ENCODE measurements at regions of chr13 and their contacts with region 1.

Region 1: GRCh38 chr13:49300739-49301589 is 53.2 kb downstream of the CDADC1 start:
- DNase-seq: peak; percentile 91
- H3K4me3 Mint-ChIP-seq: peak overlapping the region; percentile 47
- H3K27ac Mint-ChIP-seq: peak overlapping the region; percentile 21
- H3K4me1 Mint-ChIP-seq: peaks cover 12% of the 10 kb centered on the region
- H3K27me3 Mint-ChIP-seq: no peaks in the 10 kb centered on the region

Region 2: DNA sequence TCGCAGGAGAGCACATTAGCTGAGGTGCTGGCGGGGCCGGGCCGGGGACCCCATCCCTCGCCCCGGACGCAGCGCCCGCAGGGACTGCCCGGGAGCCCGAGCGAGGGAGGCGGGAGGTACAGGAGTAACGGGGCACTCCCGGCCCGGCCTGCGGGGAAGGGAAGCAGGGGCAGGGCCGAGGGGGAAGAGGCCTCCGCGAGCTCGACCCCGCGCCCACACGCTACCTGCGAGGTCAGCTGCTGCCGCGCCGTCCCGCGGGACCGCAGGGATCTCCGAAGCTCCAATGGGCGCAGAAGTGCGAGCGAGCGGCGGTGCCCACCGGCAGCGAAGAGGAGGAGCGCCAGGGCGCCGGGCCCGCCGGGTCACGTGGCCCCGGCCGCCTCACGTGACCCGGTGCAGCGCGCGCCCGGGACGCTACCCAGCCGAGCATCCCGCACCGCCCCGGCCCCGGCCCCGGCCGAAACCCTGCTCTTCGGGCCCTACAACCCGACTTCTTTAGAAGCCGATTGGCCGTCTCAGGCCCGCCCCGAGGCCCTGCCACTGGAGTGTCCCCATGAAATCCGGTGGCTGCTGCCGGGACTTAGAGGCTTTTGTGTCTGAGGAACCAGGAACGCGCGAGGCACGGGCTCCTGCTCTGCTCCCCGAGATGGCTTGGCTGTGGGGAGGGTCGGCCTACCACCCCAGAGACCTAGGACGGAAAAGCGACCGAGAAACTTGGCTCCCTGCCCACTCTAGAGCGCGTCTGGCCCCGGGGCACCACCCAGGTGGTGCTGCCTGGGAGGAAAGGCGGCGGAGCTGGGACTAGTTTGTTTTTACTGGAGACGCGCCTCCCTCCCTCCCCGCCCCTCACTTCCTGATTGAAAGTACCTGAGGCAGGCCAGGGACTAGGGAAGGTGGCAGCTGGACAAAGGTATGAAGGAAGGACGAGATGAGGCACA is 284.5 kb after region 1 on chr13 and contains the start of gene RCBTB1:
- intact Hi-C with region 1: loop called (anchors 5 kb)
- DNase-seq: peak; percentile 92
- H3K4me3 Mint-ChIP-seq: peak within 1 kb of the TSS; percentile 90
- H3K27ac Mint-ChIP-seq: peak within 1 kb of the TSS; percentile 79
- H3K4me1 Mint-ChIP-seq: peaks cover 29% of the 10 kb centered on the region
- H3K27me3 Mint-ChIP-seq: peaks cover 5% of the 10 kb centered on the region
- total RNA-seq, gene RCBTB1: 14.8 and 16.2 TPM in 2 replicates

Region 3: DNA sequence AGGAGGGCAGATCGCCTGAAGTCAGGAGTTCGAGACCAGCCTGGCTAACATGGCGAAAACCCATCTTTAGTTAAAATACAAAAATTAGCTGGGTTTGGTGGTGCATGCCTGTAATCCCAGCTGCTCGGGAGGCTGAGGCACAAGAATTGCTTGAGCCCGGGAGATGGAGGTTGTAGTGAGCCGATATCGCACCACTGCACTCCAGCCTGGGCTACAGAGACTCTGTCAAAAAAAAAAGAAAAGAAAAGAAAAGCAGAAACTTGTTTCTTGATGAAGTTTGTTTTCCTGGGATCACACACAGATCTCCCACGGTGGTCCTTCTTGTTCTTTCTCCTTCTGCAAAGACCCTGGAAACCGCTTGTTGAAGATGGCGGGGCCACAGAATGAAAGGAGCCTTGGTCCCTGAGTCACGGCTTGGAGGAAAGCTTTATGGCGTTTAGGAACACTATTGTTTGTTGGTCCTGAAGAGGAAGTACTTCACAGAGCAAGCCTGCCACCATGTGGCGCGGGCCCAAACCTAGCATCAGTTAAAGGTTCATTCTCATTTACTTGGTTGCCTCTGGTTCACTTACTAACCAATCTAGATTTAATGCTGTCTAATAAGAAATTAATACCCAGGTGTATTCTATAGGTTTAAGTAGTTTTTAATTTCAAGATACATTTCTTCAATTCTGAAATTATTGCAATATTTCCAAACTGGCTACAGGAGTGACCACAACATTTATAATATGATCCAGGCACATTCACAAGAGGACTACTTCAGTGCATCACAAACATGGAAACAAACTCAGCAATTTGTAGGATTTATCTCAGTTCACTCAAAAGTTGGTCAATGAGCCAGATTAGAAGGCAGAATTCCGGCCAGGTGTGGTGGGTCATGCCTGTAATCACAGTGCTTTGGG is 306.0 kb after region 1 on chr13:
- intact Hi-C with region 1: loop called (anchors 1 kb)
- DNase-seq: peak; percentile 93
- H3K4me3 Mint-ChIP-seq: peak overlapping the region; percentile 77
- H3K27ac Mint-ChIP-seq: peak overlapping the region; percentile 64
- H3K4me1 Mint-ChIP-seq: peaks cover 2% of the 10 kb centered on the region
- H3K27me3 Mint-ChIP-seq: peaks cover 3% of the 10 kb centered on the region

Region 4: DNA sequence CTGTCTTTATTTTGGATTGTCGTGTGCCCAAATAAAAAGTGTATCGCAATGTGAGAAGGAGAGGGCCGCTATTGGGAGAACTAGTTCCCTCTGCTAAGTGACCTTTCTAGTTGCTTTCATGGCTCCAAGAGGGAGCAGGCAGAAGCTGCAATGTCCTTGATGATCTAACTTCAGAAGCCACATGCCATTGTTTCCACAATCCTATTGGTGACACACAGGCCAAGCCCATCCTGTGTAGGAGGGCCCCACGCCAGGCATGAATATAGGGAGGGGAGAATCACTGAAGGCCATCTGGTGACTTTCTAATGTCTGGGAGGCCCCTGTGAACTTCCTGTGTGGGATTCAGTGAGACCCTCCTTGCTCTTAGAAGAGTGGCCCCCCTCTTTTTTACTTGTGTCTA is 539.3 kb after region 1 on chr13:
- intact Hi-C with region 1: loop called (anchors 10 kb)
- DNase-seq: no peak
- H3K4me3 Mint-ChIP-seq: no peak overlapping the region
- H3K27ac Mint-ChIP-seq: no peak overlapping the region
- H3K4me1 Mint-ChIP-seq: no peaks in the 10 kb centered on the region
- H3K27me3 Mint-ChIP-seq: no peaks in the 10 kb centered on the region